ENCODE measurements at regions of chr11 and their contacts with region 1.

Region 1: DNA sequence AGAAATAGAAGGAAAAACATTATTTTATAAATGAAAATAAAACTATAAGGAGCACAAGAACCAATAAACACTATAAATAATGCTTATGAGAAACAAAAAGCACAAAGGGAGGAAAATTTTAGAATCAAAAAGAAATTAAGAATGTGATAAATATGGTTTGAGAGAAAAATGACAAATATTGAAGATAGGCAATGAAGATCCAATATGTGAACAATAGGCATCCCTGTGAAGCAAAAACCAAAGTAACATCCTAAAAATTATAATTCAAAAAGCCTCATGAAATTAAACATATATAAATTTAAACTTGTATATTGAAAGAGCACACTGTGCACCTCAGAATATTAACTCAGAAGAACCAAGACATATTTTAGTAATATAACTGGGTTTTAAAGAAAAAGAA is 216.2 kb downstream of the GRIK4 start:
- DNase-seq: no peak
- ATAC-seq: no peak
- H3K4me3 ChIP-seq: no peak overlapping the region
- H3K27ac ChIP-seq: no peak overlapping the region
- H3K4me1 ChIP-seq: no peaks in the 10 kb centered on the region
- H3K27me3 ChIP-seq: peaks cover 0 to 2% (median 0%) of the 10 kb centered on the region in 7 donors
- CTCF ChIP-seq: no peak

Region 2: DNA sequence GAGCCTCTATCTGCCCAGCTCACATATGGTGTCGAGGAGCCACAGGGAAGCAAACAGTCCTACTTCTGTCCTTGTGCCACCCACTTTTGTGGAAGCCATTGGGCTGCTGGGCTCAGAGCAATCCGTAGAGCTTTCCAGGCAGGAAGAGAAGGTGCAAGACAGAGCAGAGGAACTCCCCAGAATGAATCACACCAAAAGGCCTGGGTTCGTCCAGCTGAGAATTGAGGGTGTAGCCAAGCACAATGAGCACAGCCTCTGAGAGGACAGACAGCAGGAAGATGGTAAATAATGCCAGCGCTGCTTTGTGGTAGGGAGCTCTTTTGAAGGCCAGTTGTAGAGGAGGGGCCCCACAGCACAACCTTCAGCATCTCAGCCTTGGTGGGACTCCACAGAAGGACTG is 21.6 kb after region 1 on chr11:
- intact Hi-C with region 1: loop called in 1 of 10 experiments (anchors 1 kb)
- DNase-seq: no peak
- ATAC-seq: no peak
- H3K4me3 ChIP-seq: no peak overlapping the region
- H3K27ac ChIP-seq: no peak overlapping the region
- H3K4me1 ChIP-seq: peaks cover 0 to 13% (median 5%) of the 10 kb centered on the region in 9 donors
- H3K27me3 ChIP-seq: peaks cover 0 to 73% (median 47%) of the 10 kb centered on the region in 7 donors
- CTCF ChIP-seq: no peak